Activated CD4-positive, alpha-beta T cell treated with anti-CD3 and anti-CD28 coated beads, Interleukin-2, amount 10 ng/mL, durations not matched to agents 7 days and 5 days (primary cell): ENCODE measurements at regions of chr12 and their contacts with region 1.

Region 1: DNA sequence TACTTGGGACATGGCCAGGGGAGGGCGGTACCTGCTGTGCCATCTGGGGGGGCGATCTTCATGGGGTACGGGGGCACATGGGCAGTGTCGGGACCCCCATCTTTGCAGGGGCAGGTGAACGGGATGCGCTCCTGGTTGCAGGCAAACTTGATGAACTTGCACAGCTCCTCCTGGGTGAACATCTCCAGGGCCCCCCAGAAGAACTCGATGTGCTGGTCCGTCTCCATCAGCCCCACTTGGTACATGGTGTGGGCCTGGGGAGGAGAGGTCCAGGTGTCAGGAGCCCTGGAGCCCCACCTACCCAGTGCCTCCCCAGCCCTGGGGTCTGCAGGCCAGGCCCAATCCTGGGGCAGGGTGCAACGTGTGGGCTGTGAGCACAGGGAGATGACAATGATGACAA is 37.7 kb downstream of the TRAFD1 start:
- DNase-seq: no peak
- H3K4me3 Mint-ChIP-seq: no peak overlapping the region
- H3K27ac Mint-ChIP-seq: no peak overlapping the region
- H3K4me1 Mint-ChIP-seq: peaks cover 19% of the 10 kb centered on the region
- H3K27me3 Mint-ChIP-seq: no peaks in the 10 kb centered on the region

Region 2: GRCh38 chr12:112151766-112152541 is 11.1 kb before region 1 on chr12:
- CTCF ChIA-PET with region 1: interaction called, 12 read pairs
- POLR2A ChIA-PET with region 1: no interaction called
- DNase-seq: no peak
- H3K4me3 Mint-ChIP-seq: no peak overlapping the region
- H3K27ac Mint-ChIP-seq: no peak overlapping the region
- H3K4me1 Mint-ChIP-seq: peaks cover 1% of the 10 kb centered on the region
- H3K27me3 Mint-ChIP-seq: no peaks in the 10 kb centered on the region

Region 3: DNA sequence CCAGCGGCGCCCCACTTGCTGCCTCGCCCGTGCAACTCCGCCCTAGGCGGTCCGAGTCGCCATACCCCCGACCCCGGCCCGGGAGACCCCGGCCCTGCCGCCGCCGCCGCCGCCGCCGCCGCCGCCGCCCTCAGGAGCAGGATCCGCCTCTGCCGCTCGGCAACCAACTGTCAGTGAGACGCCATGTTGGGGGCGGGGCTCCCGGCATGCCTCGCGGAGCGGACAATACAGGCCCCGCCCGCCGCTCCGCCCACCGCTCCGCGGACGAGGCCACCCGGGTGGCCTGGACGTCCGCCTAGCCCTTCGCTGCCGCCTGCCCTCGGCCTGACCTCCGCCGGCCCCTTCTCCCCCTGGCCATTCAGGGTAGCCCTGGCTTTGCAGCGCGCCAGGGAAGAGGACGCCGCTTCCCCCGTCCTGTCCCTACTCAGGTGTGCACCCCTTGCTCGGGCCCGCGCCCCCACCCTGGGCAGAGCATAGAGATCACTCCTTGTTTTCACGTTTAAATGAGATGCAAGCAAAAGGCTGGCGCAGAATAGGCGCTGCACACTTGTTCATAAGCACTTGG is 219.3 kb after region 1 on chr12 and contains the start of gene HECTD4:
- CTCF ChIA-PET with region 1: no interaction called
- POLR2A ChIA-PET with region 1: no interaction called
- DNase-seq: peak; percentile 95
- H3K4me3 Mint-ChIP-seq: peak within 1 kb of the TSS; percentile 93
- H3K27ac Mint-ChIP-seq: peak within 1 kb of the TSS; percentile 93
- H3K4me1 Mint-ChIP-seq: peaks cover 33% of the 10 kb centered on the region
- H3K27me3 Mint-ChIP-seq: no peaks in the 10 kb centered on the region
- total RNA-seq, gene HECTD4: 43.2 to 44.7 TPM

Region 4: DNA sequence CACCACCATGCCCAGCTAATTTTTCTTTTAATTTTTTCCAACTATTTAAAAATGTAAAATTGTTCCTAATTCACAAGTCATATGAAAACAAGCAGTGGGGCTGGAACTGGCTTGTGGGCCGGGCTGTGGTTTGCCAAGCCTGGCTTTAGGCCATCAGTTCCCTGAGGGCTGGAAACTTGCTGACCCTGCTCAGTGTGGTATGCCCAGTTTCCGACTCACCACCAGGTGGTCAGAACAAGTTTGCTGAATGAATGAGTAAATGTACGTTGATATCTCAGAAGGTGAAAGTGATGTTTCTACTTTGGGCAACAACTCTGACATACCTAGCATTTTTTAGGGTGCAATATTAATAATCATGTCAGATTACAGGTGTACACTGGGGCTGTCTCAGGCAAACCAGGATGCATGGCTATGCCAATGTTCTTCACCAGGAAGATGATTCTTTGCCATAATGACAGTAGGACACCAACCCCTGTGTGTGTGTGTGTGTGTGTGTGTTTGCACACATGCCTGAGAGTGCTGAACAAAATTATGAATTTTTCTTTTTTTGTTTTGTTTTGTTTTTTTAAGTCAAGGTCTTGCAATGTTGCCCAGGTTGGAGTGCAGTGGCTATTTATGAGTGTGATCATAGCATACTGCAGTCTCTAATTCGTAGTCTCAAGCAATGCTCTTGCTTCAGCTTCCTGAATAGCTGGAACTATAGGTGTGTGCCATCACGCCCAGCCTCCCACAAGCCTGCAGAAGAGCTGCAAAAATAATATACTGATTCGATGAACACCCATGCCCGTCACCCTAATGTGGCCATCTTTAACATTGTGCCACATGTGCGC is 361.9 kb after region 1 on chr12:
- CTCF ChIA-PET with region 1: no interaction called
- POLR2A ChIA-PET with region 1: no interaction called
- DNase-seq: no peak
- H3K4me3 Mint-ChIP-seq: no peak overlapping the region
- H3K27ac Mint-ChIP-seq: no peak overlapping the region
- H3K4me1 Mint-ChIP-seq: no peaks in the 10 kb centered on the region
- H3K27me3 Mint-ChIP-seq: peaks cover under 1% of the 10 kb centered on the region